ENCODE measurements at regions of chr1 and their contacts with region 1.

Region 1: DNA sequence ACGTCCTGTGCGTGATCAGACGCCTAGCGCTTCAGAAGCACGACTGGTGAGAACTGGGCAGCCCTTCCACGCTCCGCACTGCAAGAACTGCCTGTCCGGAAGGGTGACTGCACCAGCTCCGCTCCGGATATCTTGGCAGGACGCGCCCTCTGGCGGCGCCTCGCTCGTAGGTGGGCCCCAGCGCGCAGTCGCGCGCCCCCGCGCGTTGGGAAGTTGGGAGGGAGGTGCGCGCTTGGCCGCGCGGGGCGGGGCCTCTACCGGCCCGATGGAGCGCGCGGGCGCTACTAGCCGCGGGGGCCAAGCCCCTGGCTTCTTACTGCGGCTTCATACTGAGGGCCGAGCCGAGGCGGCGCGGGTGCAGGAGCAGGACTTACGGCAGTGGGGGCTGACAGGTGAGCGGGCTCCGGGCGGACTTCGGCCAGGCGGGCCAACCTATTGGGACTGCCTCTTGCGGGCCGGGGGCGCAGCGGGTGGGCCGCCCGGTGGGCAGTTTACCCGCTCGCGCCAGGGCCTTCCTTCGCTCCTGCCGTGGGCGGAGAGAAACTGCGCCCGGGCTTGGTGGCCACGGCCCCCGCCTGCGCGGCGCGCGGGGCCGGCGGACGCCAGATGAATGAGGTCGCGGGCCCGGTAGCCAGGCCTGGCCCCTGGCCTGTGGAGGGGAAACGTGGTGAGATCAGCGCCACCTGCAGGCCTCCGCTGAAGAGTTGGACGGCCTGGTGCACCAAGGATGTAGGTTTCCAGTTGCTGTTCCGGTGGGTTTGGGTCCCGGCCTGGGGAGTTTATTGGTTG is at the start of gene CHD1L:
- DNase-seq: peak; percentile 96 to 98
- ATAC-seq: peak; percentile 94 to 95 (median 94)
- H3K4me3 ChIP-seq: peak within 1 kb of the TSS; percentile 79
- H3K27ac ChIP-seq: peak within 1 kb of the TSS; percentile 96
- H3K4me1 ChIP-seq: peaks cover 30% of the 10 kb centered on the region
- H3K27me3 ChIP-seq: no peaks in the 10 kb centered on the region
- CTCF ChIP-seq: peak; percentile 87
- total RNA-seq, gene CHD1L: 15.9 to 20.5 (median 18.9) TPM

Region 2: DNA sequence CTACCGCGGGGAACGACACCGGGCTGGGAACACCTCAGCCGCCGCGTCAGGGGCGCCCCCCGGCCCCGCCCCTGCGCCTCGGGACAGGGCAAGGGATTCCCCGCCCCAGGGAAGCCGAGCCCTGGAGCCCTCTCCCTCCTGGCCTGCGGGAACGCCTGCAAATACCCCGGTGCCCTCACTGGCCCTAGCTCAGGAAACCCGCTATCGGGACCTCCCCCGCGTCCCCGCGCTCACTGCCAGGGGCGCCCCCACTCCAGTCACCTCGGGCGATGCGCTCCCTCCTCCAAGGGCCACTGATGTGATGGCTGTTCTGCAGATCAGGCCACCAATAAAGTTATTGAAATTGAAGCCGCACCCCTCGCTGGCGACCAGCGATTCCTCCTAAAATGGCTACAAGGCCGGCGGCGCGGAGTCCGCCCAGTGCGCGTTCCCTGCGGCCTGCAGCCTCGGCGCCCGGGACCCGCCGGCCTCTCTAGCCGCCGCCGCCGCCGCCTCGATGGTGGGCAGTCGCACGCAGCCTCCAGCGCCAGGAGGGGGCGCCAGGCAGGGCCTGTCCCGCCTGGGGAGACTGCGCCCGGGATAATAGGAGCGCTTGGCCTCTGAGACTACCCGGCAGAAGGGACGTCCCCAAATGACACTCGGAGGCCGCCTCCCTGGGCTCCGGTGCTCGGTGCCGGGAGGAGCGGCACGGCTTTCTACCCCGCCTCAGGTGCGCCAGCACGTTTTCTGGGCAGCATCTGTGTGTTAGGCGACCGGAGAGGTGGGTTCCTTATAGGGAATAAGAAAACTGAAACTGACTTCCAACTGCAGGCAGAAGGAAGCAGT is 70.3 kb before region 1 on chr1 and contains the start of gene PRKAB2:
- intact Hi-C with region 1: loop called (anchors 1 to 2 kb)
- DNase-seq: peak; percentile 98
- ATAC-seq: peak; percentile 95 to 98 (median 96)
- H3K4me3 ChIP-seq: peak within 1 kb of the TSS; percentile 93
- H3K27ac ChIP-seq: peak within 1 kb of the TSS; percentile 94
- H3K4me1 ChIP-seq: peaks cover 42% of the 10 kb centered on the region
- H3K27me3 ChIP-seq: no peaks in the 10 kb centered on the region
- CTCF ChIP-seq: peak; percentile 93
- total RNA-seq, gene PRKAB2: 50.8 to 77.7 (median 54.1) TPM

Region 3: DNA sequence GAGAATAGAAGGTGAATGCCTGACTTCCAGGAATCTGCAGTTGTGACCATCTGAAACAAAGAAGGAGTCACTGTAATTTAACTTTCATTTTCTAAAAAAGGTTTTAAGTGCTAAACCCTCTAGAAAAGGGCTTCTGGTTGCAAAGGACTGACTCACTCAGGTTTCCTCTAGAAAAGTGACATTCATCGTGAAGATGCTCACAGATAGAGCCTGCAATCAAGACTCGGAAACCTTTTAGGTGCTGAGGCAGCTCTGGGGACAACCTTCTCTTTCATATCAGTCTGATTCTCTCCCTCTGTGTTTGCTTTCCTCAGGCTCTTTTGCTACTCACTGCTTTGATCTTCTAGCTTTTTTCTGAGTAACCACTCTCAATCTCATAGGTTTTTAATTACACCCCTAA is 306.9 kb after region 1 on chr1:
- intact Hi-C with region 1: no loop called
- DNase-seq: no peak
- ATAC-seq: no peak
- H3K4me3 ChIP-seq: no peak overlapping the region
- H3K27ac ChIP-seq: no peak overlapping the region
- H3K4me1 ChIP-seq: peaks cover 45% of the 10 kb centered on the region
- H3K27me3 ChIP-seq: no peaks in the 10 kb centered on the region
- CTCF ChIP-seq: no peak

Measured in psoas muscle (tissue), 8 donors.